ENCODE measurements at regions of chr3 and their contacts with region 1.

Region 1: GRCh38 chr3:125594581-125595011 is 701 bp downstream of the OSBPL11 start:
- DNase-seq: peak in 2 of 9 experiments; percentile 6 to 17
- ATAC-seq: no peak
- H3K4me3 ChIP-seq: peak overlapping the region; percentile 85 to 91
- H3K4me3 Mint-ChIP-seq: peak overlapping the region; percentile 92
- H3K27ac ChIP-seq: peak overlapping the region; percentile 68 to 87
- H3K27ac Mint-ChIP-seq: peak overlapping the region; percentile 77
- H3K4me1 ChIP-seq: peaks cover 16% of the 10 kb centered on the region
- H3K4me1 Mint-ChIP-seq: peaks cover 44% of the 10 kb centered on the region
- H3K27me3 ChIP-seq: no peaks in the 10 kb centered on the region
- H3K27me3 Mint-ChIP-seq: no peaks in the 10 kb centered on the region
- CTCF ChIP-seq: no peak

Region 2: GRCh38 chr3:123960781-123961507 is 1633.7 kb before region 1 on chr3 and contains the start of gene CCDC14:
- CTCF ChIA-PET with region 1: no interaction called
- POLR2A ChIA-PET with region 1: no interaction called
- intact Hi-C with region 1: loop called in 1 of 2 experiments (anchors 5 kb)
- DNase-seq: peak; percentile 37 to 84 (median 73)
- ATAC-seq: peak; percentile 88
- H3K4me3 ChIP-seq: peak within 1 kb of the TSS; percentile 63
- H3K4me3 Mint-ChIP-seq: peak within 1 kb of the TSS; percentile 96
- H3K27ac ChIP-seq: peak within 1 kb of the TSS; percentile 52 to 59
- H3K27ac Mint-ChIP-seq: peak within 1 kb of the TSS; percentile 93
- H3K4me1 ChIP-seq: peaks cover 16% of the 10 kb centered on the region
- H3K4me1 Mint-ChIP-seq: peaks cover 30% of the 10 kb centered on the region
- H3K27me3 ChIP-seq: no peaks in the 10 kb centered on the region
- H3K27me3 Mint-ChIP-seq: peaks cover 5% of the 10 kb centered on the region
- CTCF ChIP-seq: no peak
- total RNA-seq, gene CCDC14: 21.9 to 23.8 TPM

Region 3: DNA sequence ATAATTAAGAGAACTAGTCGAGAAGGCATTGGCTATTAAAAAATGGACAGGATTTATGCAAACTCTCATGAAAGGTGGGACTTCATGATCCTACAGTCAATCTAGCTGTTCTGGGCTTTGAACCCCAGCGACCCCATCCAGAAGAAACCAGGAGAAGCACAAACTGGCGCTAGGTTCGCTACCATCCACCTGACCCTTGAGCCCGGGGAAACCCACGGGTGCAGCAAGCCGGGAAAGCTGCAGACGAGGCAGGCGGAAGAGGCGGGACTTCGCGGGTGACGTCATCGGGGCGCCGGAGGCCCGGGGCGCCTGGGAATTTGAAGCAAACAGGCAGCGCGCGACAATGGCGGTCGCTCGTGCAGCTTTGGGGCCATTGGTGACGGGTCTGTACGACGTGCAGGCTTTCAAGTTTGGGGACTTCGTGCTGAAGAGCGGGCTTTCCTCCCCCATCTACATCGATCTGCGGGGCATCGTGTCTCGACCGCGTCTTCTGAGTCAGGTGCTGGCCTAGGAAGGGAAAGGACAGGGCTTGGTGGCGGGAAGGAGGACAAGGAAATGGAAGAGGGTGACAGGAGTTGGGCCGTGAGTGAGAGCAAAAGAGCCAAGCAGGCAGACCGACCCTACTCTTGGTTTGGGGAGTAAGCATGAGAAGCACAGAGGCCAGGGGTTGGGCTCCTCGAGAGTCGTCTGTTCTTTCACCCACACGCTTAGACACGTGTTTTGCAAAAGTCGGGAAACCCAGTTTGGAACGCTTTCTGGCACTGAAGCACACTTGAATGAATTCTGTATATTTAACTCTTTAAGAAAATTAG is 864.3 kb before region 1 on chr3 and contains the start of gene UMPS:
- CTCF ChIA-PET with region 1: no interaction called
- POLR2A ChIA-PET with region 1: no interaction called
- intact Hi-C with region 1: loop called (anchors 1 kb)
- DNase-seq: peak; percentile 82 to 95 (median 93)
- ATAC-seq: peak; percentile 91
- H3K4me3 ChIP-seq: peak within 1 kb of the TSS; percentile 96 to 97
- H3K4me3 Mint-ChIP-seq: peak within 1 kb of the TSS; percentile 99
- H3K27ac ChIP-seq: peak within 1 kb of the TSS; percentile 82 to 93
- H3K27ac Mint-ChIP-seq: peak within 1 kb of the TSS; percentile 99
- H3K4me1 ChIP-seq: peaks cover 29% of the 10 kb centered on the region
- H3K4me1 Mint-ChIP-seq: peaks cover 39% of the 10 kb centered on the region
- H3K27me3 ChIP-seq: peaks cover 0 to 4% of the 10 kb centered on the region in 2 experiments
- H3K27me3 Mint-ChIP-seq: peaks cover 10% of the 10 kb centered on the region
- CTCF ChIP-seq: no peak
- total RNA-seq, gene UMPS: 16.7 to 19.8 TPM

Region 4: GRCh38 chr3:125519678-125520589 is 74.7 kb before region 1 on chr3 and contains the start of gene SNX4:
- CTCF ChIA-PET with region 1: no interaction called
- POLR2A ChIA-PET with region 1: no interaction called
- intact Hi-C with region 1: loop called (anchors 1 to 2 kb)
- DNase-seq: peak; percentile 73 to 91 (median 86)
- ATAC-seq: peak; percentile 96
- H3K4me3 ChIP-seq: peak within 1 kb of the TSS; percentile 66 to 77
- H3K4me3 Mint-ChIP-seq: peak within 1 kb of the TSS; percentile 97
- H3K27ac ChIP-seq: peak within 1 kb of the TSS; percentile 60 to 61
- H3K27ac Mint-ChIP-seq: peak within 1 kb of the TSS; percentile 95
- H3K4me1 ChIP-seq: peaks cover 12% of the 10 kb centered on the region
- H3K4me1 Mint-ChIP-seq: peaks cover 46% of the 10 kb centered on the region
- H3K27me3 ChIP-seq: no peaks in the 10 kb centered on the region
- H3K27me3 Mint-ChIP-seq: no peaks in the 10 kb centered on the region
- CTCF ChIP-seq: no peak
- total RNA-seq, gene SNX4: 26.4 to 29.7 TPM

Measured in CD8-positive, alpha-beta T cell (primary cell).